ENCODE measurements at regions of chr19 and their contacts with region 1.

Region 1: GRCh38 chr19:44212250-44212865 is at the start of gene ZNF227:
- DNase-seq: peak; percentile 97
- H3K4me3 ChIP-seq: peak within 1 kb of the TSS; percentile 57 to 75 (median 72)
- H3K27ac ChIP-seq: peak within 1 kb of the TSS; percentile 83 to 93 (median 86)
- H3K4me1 ChIP-seq: peaks cover 0 to 12% (median 8%) of the 10 kb centered on the region in 4 donors
- H3K27me3 ChIP-seq: no peaks in the 10 kb centered on the region
- CTCF ChIP-seq: no peak
- EP300 ChIP-seq: no peak
- POLR2A ChIP-seq: no peak
- total RNA-seq, gene ZNF227: 10.9 to 15.0 (median 14.3) TPM

Region 2: GRCh38 chr19:44002566-44003460 is 209.5 kb before region 1 on chr19 and contains the start of gene ZNF230:
- intact Hi-C with region 1: loop called (anchors 5 kb)
- DNase-seq: peak; percentile 96
- H3K4me3 ChIP-seq: peak within 1 kb of the TSS; percentile 57 to 85 (median 69)
- H3K27ac ChIP-seq: peak within 1 kb of the TSS; percentile 69 to 81 (median 80)
- H3K4me1 ChIP-seq: peaks cover 0 to 19% (median 12%) of the 10 kb centered on the region in 4 donors
- H3K27me3 ChIP-seq: no peaks in the 10 kb centered on the region
- CTCF ChIP-seq: peak in 1 of 4 experiments; percentile 14
- EP300 ChIP-seq: peak in 1 of 4 donors; percentile 10
- POLR2A ChIP-seq: peak in 1 of 2 donors; percentile 26
- total RNA-seq, gene ZNF230: 3.0 to 10.6 (median 5.1) TPM

Region 3: DNA sequence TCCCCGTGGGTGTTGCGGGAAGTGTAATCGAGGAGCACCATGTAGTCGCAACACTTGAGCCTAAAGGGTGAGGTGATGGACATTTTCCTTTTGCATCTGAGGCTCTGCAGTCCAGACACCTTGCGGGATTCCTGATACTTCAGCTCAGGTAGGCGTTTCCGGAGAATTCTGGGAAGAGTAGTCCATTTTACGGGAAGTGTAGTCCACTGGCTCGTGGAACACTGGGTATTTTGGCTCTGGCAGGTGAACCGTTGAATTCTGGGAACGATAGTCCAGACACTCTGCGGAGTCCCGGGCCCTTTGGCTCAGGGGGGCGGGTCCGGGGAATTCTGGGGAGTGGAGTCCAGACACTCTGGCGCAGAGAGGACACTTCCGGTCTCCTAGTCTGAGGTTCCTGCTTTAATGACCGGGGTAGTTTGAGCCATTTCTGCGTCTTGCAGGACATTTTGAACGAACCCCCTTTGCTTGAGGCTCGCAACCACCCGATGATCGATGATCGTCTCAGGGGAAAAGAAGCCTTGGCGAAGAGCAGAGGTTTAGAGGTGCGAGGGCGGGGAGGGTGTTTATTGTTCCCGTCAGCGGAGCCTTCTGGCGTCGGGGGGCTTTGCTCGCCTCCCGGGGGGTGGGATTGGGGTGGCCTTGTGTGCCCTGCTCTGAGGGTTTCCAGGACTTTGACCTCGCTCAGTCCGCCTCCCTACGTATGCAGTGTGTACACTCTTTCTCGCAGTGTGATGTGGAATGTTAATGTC is 160.5 kb before region 1 on chr19 and contains the start of gene ZNF223:
- intact Hi-C with region 1: loop called (anchors 5 kb)
- DNase-seq: peak; percentile 97
- H3K4me3 ChIP-seq: peak within 1 kb of the TSS; percentile 58 to 81 (median 68)
- H3K27ac ChIP-seq: peak within 1 kb of the TSS; percentile 73 to 78 (median 77)
- H3K4me1 ChIP-seq: peaks cover 0 to 17% (median 13%) of the 10 kb centered on the region in 4 donors
- H3K27me3 ChIP-seq: peaks cover 0 to 7% (median 0%) of the 10 kb centered on the region in 3 donors
- CTCF ChIP-seq: no peak
- EP300 ChIP-seq: peak in 1 of 4 donors; percentile 28
- POLR2A ChIP-seq: no peak
- total RNA-seq, gene ZNF223: 2.5 to 5.0 (median 4.2) TPM

Region 4: GRCh38 chr19:44093931-44094765 is 118.2 kb before region 1 on chr19 and contains the start of gene ZNF224:
- intact Hi-C with region 1: loop called (anchors 10 kb)
- DNase-seq: peak; percentile 94
- H3K4me3 ChIP-seq: peak within 1 kb of the TSS; percentile 69 to 83 (median 76)
- H3K27ac ChIP-seq: peak within 1 kb of the TSS; percentile 80 to 81 (median 81)
- H3K4me1 ChIP-seq: peaks cover 0 to 13% (median 10%) of the 10 kb centered on the region in 4 donors
- H3K27me3 ChIP-seq: no peaks in the 10 kb centered on the region
- CTCF ChIP-seq: no peak
- EP300 ChIP-seq: no peak
- POLR2A ChIP-seq: no peak
- total RNA-seq, gene ZNF224: 16.6 to 23.0 (median 19.6) TPM

Region 5: GRCh38 chr19:44164673-44165512 is 47.5 kb before region 1 on chr19 and contains the start of gene ZNF226:
- intact Hi-C with region 1: loop called (anchors 2 kb)
- DNase-seq: peak; percentile 95
- H3K4me3 ChIP-seq: peak within 1 kb of the TSS; percentile 45 to 73 (median 65)
- H3K27ac ChIP-seq: peak within 1 kb of the TSS; percentile 82 to 87 (median 84)
- H3K4me1 ChIP-seq: peaks cover 0 to 12% (median 11%) of the 10 kb centered on the region in 4 donors
- H3K27me3 ChIP-seq: no peaks in the 10 kb centered on the region
- CTCF ChIP-seq: no peak
- EP300 ChIP-seq: no peak
- POLR2A ChIP-seq: no peak
- total RNA-seq, gene ZNF226: 14.4 to 20.2 (median 18.6) TPM

Region 6: DNA sequence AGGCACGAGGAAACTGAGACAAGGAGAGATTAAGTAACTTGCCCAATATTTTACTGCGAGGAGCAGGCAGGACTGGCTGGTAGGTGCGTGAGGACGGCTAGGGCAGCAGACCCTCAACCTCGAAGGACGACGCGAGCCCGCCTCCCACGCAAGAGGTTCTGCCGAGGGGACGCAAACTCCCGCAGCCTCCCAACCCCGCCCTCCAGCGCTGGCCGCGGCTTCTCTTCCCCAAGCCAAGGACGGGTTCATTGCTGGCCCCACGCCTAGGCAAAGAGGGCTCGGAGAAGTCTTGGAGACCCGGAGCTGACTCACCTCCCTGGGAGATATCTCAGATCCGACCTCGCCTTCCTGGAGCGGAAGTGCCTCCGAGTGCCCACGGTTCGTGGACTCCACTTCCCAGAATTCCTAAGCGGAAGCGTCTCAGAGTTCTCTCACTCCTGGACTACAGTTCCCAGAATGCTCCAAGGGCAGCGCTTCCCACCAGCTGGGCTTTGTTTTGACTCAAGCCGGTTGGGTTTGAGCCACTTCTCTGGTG is 92.4 kb after region 1 on chr19 and contains the start of gene ZNF235:
- intact Hi-C with region 1: loop called (anchors 2 kb)
- DNase-seq: peak; percentile 95
- H3K4me3 ChIP-seq: peak within 1 kb of the TSS; percentile 57 to 84 (median 78)
- H3K27ac ChIP-seq: peak within 1 kb of the TSS; percentile 76 to 89 (median 89)
- H3K4me1 ChIP-seq: peaks cover 0 to 12% (median 10%) of the 10 kb centered on the region in 4 donors
- H3K27me3 ChIP-seq: no peaks in the 10 kb centered on the region
- CTCF ChIP-seq: no peak
- EP300 ChIP-seq: no peak
- POLR2A ChIP-seq: peak; percentile 32 to 42
- total RNA-seq, gene ZNF235: 5.8 to 12.7 (median 9.0) TPM

Region 7: DNA sequence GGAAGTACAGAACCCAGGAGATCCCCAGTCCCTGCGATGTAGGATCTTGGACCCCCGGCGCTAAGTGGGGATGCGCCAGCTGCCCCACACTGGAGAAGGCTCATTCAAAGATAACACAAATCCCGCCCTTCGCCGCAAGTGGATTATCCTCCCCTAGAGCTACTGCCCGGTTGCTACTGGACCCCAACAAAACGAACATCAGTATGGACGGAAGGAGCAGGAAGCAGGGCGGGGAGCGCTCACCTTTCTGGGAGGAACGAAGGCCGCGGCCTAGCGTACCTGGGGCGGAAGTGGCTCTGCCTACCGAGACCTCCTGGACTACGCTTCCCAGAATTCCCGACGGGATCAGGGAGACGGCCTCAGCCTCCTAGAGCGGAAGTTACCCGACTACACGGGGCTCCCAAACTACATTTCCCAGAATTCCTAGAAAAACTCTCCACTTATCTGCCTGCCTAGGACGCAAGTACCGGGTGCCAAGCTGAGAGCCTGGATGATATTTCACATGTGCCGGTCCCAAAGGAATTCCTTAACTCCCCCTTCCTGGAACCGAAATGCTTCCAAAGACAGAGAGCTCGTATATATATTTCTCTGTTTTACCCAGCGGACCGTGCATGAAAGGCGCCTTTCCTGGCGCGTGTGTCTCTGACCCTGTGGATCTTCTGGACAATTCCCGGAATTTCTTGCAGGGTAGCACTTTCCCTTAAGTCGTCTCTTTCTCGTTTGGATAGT is 144.2 kb after region 1 on chr19 and contains the start of gene ZNF112:
- intact Hi-C with region 1: loop called (anchors 5 kb)
- DNase-seq: peak; percentile 93
- H3K4me3 ChIP-seq: peak within 1 kb of the TSS; percentile 39 to 60 (median 54)
- H3K27ac ChIP-seq: peak within 1 kb of the TSS; percentile 58 to 69 (median 62)
- H3K4me1 ChIP-seq: peaks cover 0 to 10% (median 5%) of the 10 kb centered on the region in 4 donors
- H3K27me3 ChIP-seq: no peaks in the 10 kb centered on the region
- CTCF ChIP-seq: no peak
- EP300 ChIP-seq: no peak
- POLR2A ChIP-seq: no peak
- total RNA-seq, gene ZNF112: 3.3 to 8.9 (median 4.7) TPM

Measured in sigmoid colon (tissue), 7 donors.